ENCODE measurements at regions of chr7 and their contacts with region 1.

Region 1: GRCh38 chr7:26376175-26376917 is 84.7 kb downstream of the SNX10 start:
- DNase-seq: peak; percentile 20
- H3K4me3 Mint-ChIP-seq: peak overlapping the region; percentile 79
- H3K27ac Mint-ChIP-seq: peak overlapping the region; percentile 79
- H3K4me1 Mint-ChIP-seq: peaks cover 7% of the 10 kb centered on the region
- H3K27me3 Mint-ChIP-seq: peaks cover 30% of the 10 kb centered on the region

Region 2: DNA sequence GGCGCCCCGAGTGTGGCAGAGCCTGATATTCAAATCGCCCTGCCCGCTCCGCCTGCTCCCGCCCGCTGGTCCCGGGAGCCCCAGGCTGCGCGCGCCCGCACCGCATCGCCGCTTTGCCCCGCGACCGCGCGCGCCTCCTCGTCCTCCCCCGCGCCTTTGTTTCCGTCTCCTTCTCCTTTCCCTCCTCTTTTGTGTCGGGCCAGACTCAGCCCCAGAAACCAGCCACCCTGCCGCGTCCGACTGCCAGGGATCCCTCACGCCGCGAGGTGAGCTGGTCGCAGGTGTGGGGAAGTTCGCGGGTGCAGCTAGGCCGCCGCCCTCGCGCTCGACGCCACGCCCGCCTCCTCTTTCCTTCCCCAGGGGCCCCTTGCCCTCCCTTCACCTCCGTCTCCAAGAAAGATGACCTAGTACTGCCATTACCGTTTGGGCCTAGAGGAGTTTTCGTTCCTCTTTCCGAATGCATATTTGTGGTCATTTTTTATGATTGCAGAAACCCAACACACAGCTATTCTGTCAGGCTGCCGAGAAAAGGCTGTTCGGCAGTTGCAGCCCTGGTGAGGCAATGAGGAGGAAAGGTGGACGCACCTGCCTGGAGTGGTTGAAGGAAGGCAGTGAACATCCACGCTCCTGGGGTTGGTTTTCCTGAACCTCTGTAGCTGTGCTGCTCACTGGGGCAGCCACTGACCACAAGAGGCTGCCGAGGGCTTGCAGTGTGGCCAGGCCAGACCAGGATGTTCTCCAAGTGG is 22.6 kb after region 1 on chr7:
- intact Hi-C with region 1: loop called (anchors 1 kb)
- DNase-seq: peak; percentile 8
- H3K4me3 Mint-ChIP-seq: peak overlapping the region; percentile 92
- H3K27ac Mint-ChIP-seq: peak overlapping the region; percentile 89
- H3K4me1 Mint-ChIP-seq: peaks cover 13% of the 10 kb centered on the region
- H3K27me3 Mint-ChIP-seq: peaks cover 54% of the 10 kb centered on the region

Region 3: GRCh38 chr7:26500749-26501352 is 124.5 kb after region 1 on chr7:
- intact Hi-C with region 1: loop called (anchors 1 kb)
- DNase-seq: no peak
- H3K4me3 Mint-ChIP-seq: no peak overlapping the region
- H3K27ac Mint-ChIP-seq: no peak overlapping the region
- H3K4me1 Mint-ChIP-seq: no peaks in the 10 kb centered on the region
- H3K27me3 Mint-ChIP-seq: peaks cover 13% of the 10 kb centered on the region